Activated T-helper 2 cell treated with anti-CD3 and anti-CD28 coated beads, Interferon-gamma antibody, Interleukin-2, Interleukin-4, amounts not matched to agents 10 μg/mL and 5 μg/mL and 100 μg/mL, durations not matched to agents 14 hours and 24 hours and 36 hours (primary cell): ENCODE measurements at regions of chr2 and their contacts with region 1.

Region 1: GRCh38 chr2:109613922-109614714 is at the starts of genes SEPTIN10 and SOWAHC:
- DNase-seq: peak; percentile 73
- H3K4me3 Mint-ChIP-seq: peak within 1 kb of the TSS; percentile 81
- H3K27ac Mint-ChIP-seq: peak within 1 kb of the TSS; percentile 30
- H3K4me1 Mint-ChIP-seq: peaks cover 13% of the 10 kb centered on the region
- H3K27me3 Mint-ChIP-seq: peaks cover 72% of the 10 kb centered on the region
- total RNA-seq, gene SEPTIN10: 1.4 and 2.9 TPM in 2 replicates
- total RNA-seq, gene SOWAHC: 1.7 and 1.9 TPM in 2 replicates

Region 2: GRCh38 chr2:108533832-108534583 is 1080.1 kb before region 1 on chr2 and contains the start of gene LIMS1:
- intact Hi-C with region 1: loop called (anchors 5 kb)
- DNase-seq: peak; percentile 77
- H3K4me3 Mint-ChIP-seq: peak within 1 kb of the TSS; percentile 96
- H3K27ac Mint-ChIP-seq: peak within 1 kb of the TSS; percentile 97
- H3K4me1 Mint-ChIP-seq: peaks cover 52% of the 10 kb centered on the region
- H3K27me3 Mint-ChIP-seq: no peaks in the 10 kb centered on the region
- total RNA-seq, gene LIMS1: 48.4 and 49.1 TPM in 2 replicates

Region 3: GRCh38 chr2:109128048-109128465 is 486.1 kb before region 1 on chr2:
- intact Hi-C with region 1: loop called (anchors 5 kb)
- DNase-seq: peak; percentile 40
- H3K4me3 Mint-ChIP-seq: peak overlapping the region; percentile 68
- H3K27ac Mint-ChIP-seq: no peak overlapping the region
- H3K4me1 Mint-ChIP-seq: peaks cover 19% of the 10 kb centered on the region
- H3K27me3 Mint-ChIP-seq: peaks cover 62% of the 10 kb centered on the region

Region 4: DNA sequence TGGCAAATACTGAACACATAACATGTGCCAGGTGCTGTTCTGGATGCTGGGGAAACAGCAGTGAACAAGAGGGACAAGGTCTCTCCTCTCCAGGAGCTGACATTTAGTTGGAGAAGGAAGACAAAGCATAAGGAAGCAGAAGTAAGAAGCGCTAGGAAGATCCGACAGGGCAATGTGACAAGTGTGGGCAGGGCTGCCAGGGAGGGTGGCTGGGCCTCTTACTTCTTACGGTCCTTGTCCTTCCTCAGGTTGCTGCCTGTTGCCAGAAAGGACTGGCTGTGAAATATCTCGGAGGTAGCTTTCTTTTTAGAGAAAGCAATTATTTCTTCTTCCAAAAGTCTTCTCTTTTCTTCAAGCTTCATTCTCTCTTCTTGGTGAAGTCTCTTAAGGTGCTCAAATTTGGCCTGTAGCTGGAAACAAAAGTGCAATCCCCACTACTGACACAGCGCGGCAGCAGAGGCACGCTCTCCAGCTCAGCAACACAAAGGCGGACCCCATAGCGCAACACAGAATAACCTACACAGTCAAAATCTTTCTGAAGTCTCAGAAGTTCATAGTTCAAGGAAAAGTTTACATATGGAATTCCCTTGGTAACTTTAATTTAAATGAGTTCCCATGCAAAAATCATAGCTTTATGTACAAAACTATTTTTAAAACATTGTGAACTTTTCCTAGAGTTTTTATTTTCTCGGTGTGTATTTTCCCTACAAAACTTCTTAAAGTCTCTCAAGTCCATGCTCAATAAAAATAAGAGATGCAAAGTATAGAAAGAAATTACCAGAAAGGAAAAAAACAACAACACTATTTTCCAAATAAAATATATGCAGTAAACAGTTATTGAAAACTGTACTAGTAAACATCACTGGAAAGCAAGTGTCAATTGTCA is 68.0 kb before region 1 on chr2:
- intact Hi-C with region 1: loop called (anchors 10 kb)
- DNase-seq: peak; percentile 19
- H3K4me3 Mint-ChIP-seq: no peak overlapping the region
- H3K27ac Mint-ChIP-seq: no peak overlapping the region
- H3K4me1 Mint-ChIP-seq: no peaks in the 10 kb centered on the region
- H3K27me3 Mint-ChIP-seq: peaks cover 17% of the 10 kb centered on the region